K562 (cell line): ENCODE measurements at regions of chr3 and their contacts with region 1.

Region 1: GRCh38 chr3:53513556-53514190 is 19.3 kb downstream of the CACNA1D start:
- DNase-seq: peak in 1 of 4 experiments; percentile 6
- ATAC-seq: peak; percentile 64
- H3K4me3 ChIP-seq: no peak overlapping the region
- H3K27ac ChIP-seq: no peak overlapping the region
- H3K4me1 ChIP-seq: no peaks in the 10 kb centered on the region
- H3K27me3 ChIP-seq: peaks cover 6 to 30% of the 10 kb centered on the region in 2 experiments
- CTCF ChIP-seq: peak in 1 of 3 experiments; percentile 32; a peak in 1 of 6 replicates
- EP300 ChIP-seq: no peak
- POLR2A ChIP-seq: no peak
- RAD21 ChIP-seq: peak in 1 of 2 experiments; percentile 37; a peak in 1 of 4 replicates

Region 2: GRCh38 chr3:53426918-53427317 is 86.8 kb before region 1 on chr3:
- CTCF ChIA-PET with region 1: no interaction called
- POLR2A ChIA-PET with region 1: no interaction called
- in situ Hi-C with region 1: no loop called
- intact Hi-C with region 1: loop called (anchors 10 kb)
- DNase-seq: peak; percentile 19 to 27 (median 26)
- ATAC-seq: peak; percentile 82
- H3K4me3 ChIP-seq: no peak overlapping the region
- H3K27ac ChIP-seq: no peak overlapping the region
- H3K4me1 ChIP-seq: no peaks in the 10 kb centered on the region
- H3K27me3 ChIP-seq: peaks cover 0 to 7% of the 10 kb centered on the region in 2 experiments; a peak in 2 of 5 replicates
- CTCF ChIP-seq: peak; percentile 49 to 58 (median 57)
- EP300 ChIP-seq: no peak
- POLR2A ChIP-seq: no peak
- RAD21 ChIP-seq: peak; percentile 27 to 56

Region 3: DNA sequence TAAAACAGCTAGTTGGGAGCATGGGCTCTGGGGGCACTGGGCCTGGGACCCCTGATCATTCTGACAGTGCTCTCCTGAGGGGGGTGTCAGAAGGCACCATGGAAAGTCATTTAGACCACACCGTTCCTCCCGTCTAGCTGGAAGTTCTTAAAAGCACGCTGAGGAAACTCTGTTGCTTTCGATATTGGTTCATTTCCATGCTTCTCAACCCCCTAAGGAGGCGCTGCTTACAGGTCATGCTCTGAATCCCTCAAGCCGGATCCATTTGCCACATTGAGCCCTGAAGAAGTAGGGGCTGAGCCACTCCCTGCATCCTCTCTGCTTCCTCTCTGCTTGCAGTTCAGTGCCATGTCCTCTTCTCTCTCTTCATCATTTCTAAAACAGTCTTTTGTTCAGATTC is 795.9 kb after region 1 on chr3:
- CTCF ChIA-PET with region 1: no interaction called
- POLR2A ChIA-PET with region 1: no interaction called
- in situ Hi-C with region 1: no loop called
- intact Hi-C with region 1: no loop called
- DNase-seq: no peak
- ATAC-seq: no peak
- H3K4me3 ChIP-seq: no peak overlapping the region
- H3K27ac ChIP-seq: no peak overlapping the region
- H3K4me1 ChIP-seq: no peaks in the 10 kb centered on the region
- H3K27me3 ChIP-seq: no peaks in the 10 kb centered on the region; a peak in 1 of 5 replicates
- CTCF ChIP-seq: no peak
- EP300 ChIP-seq: no peak
- POLR2A ChIP-seq: no peak
- RAD21 ChIP-seq: no peak